Naive thymus-derived CD4-positive, alpha-beta T cell (primary cell): ENCODE measurements at regions of chr19 and their contacts with region 1.

Region 1: GRCh38 chr19:4791170-4792018 is at the start of gene FEM1A:
- DNase-seq: peak; percentile 93 to 100 (median 99)
- ATAC-seq: peak; percentile 96
- H3K4me3 ChIP-seq: peak within 1 kb of the TSS; percentile 72
- H3K4me3 Mint-ChIP-seq: peak within 1 kb of the TSS; percentile 75 to 90 (median 87)
- H3K27ac ChIP-seq: peak within 1 kb of the TSS; percentile 92
- H3K27ac Mint-ChIP-seq: peak within 1 kb of the TSS; percentile 46 to 94 (median 85)
- H3K4me1 ChIP-seq: peaks cover 0 to 7% of the 10 kb centered on the region in 2 donors
- H3K4me1 Mint-ChIP-seq: peaks cover 7 to 46% (median 29%) of the 10 kb centered on the region in 7 donors
- H3K27me3 ChIP-seq: no peaks in the 10 kb centered on the region
- H3K27me3 Mint-ChIP-seq: no peaks in the 10 kb centered on the region
- total RNA-seq, gene FEM1A: 10.2 to 17.2 (median 14.4) TPM

Region 2: GRCh38 chr19:3626473-3627350 is 1164.7 kb before region 1 on chr19 and contains the start of gene CACTIN:
- CTCF ChIA-PET with region 1: no interaction called
- POLR2A ChIA-PET with region 1: no interaction called
- intact Hi-C with region 1: loop called in 1 of 2 experiments (anchors 5 kb)
- DNase-seq: peak; percentile 97 to 100 (median 99)
- ATAC-seq: peak; percentile 99
- H3K4me3 ChIP-seq: peak within 1 kb of the TSS; percentile 73
- H3K4me3 Mint-ChIP-seq: peak within 1 kb of the TSS; percentile 85 to 98 (median 94)
- H3K27ac ChIP-seq: peak within 1 kb of the TSS; percentile 81
- H3K27ac Mint-ChIP-seq: peak within 1 kb of the TSS; percentile 94 to 100 (median 99)
- H3K4me1 ChIP-seq: peaks cover 8 to 16% of the 10 kb centered on the region in 2 donors
- H3K4me1 Mint-ChIP-seq: peaks cover 23 to 43% (median 27%) of the 10 kb centered on the region in 7 donors
- H3K27me3 ChIP-seq: no peaks in the 10 kb centered on the region
- H3K27me3 Mint-ChIP-seq: no peaks in the 10 kb centered on the region
- total RNA-seq, gene CACTIN: 35.4 to 46.7 (median 37.1) TPM

Region 3: GRCh38 chr19:4638828-4639530 is 152.4 kb before region 1 on chr19 and contains the start of gene TNFAIP8L1:
- CTCF ChIA-PET with region 1: interaction called, 4 read pairs
- POLR2A ChIA-PET with region 1: interaction called, 7 read pairs
- intact Hi-C with region 1: loop called in 1 of 2 experiments (anchors 1 kb)
- DNase-seq: peak; percentile 97 to 100 (median 99)
- ATAC-seq: peak; percentile 97
- H3K4me3 ChIP-seq: peak within 1 kb of the TSS; percentile 81
- H3K4me3 Mint-ChIP-seq: peak within 1 kb of the TSS; percentile 90 to 99 (median 96)
- H3K27ac ChIP-seq: peak within 1 kb of the TSS; percentile 92
- H3K27ac Mint-ChIP-seq: peak within 1 kb of the TSS; percentile 92 to 99 (median 97)
- H3K4me1 ChIP-seq: peaks cover 27 to 32% of the 10 kb centered on the region in 2 donors
- H3K4me1 Mint-ChIP-seq: peaks cover 15 to 43% (median 32%) of the 10 kb centered on the region in 7 donors
- H3K27me3 ChIP-seq: no peaks in the 10 kb centered on the region
- H3K27me3 Mint-ChIP-seq: no peaks in the 10 kb centered on the region
- total RNA-seq, gene TNFAIP8L1: 11.2 to 22.4 (median 20.6) TPM

Region 4: DNA sequence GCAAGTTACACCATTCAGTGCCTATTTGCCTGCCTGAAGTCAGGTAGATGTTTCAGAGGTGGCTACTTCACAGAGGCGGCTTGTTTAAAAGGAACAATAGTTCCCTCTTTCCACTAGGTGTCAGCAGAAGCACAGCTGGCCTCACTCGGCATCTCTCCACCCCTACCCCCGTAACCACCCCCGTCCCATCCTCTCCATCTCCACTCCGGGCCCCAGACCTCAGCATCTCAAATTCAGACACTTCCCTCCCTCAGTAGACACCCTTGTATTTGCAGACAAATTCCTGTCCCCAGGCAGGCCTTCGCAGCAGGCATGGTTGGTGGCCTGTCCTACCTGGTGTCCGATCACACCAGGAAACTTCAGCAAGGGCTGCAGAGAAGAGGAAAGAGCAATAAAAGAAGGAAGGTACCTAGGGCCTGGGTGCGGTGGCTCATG is 58.7 kb before region 1 on chr19:
- CTCF ChIA-PET with region 1: interaction called, 33 read pairs
- POLR2A ChIA-PET with region 1: interaction called, 20 read pairs
- intact Hi-C with region 1: loop called (anchors 1 kb)
- DNase-seq: peak in 8 of 9 donors; percentile 38 to 66 (median 54)
- ATAC-seq: peak; percentile 95
- H3K4me3 ChIP-seq: peak overlapping the region; percentile 24
- H3K4me3 Mint-ChIP-seq: peak overlapping the region in 6 of 10 donors; percentile 2 to 77 (median 35)
- H3K27ac ChIP-seq: no peak overlapping the region
- H3K27ac Mint-ChIP-seq: peak overlapping the region in 4 of 9 donors; percentile 1 to 78 (median 52)
- H3K4me1 ChIP-seq: peaks cover 3 to 4% of the 10 kb centered on the region in 2 donors
- H3K4me1 Mint-ChIP-seq: peaks cover 4 to 11% (median 6%) of the 10 kb centered on the region in 7 donors
- H3K27me3 ChIP-seq: no peaks in the 10 kb centered on the region
- H3K27me3 Mint-ChIP-seq: peaks cover 0 to 14% (median 5%) of the 10 kb centered on the region in 5 donors

Region 5: GRCh38 chr19:4815426-4816201 is 24.2 kb after region 1 on chr19:
- CTCF ChIA-PET with region 1: no interaction called
- POLR2A ChIA-PET with region 1: interaction called, 3 read pairs
- intact Hi-C with region 1: loop called (anchors 1 kb)
- DNase-seq: peak; percentile 43 to 77 (median 67)
- ATAC-seq: peak; percentile 86
- H3K4me3 ChIP-seq: peak overlapping the region; percentile 40
- H3K4me3 Mint-ChIP-seq: peak overlapping the region; percentile 68 to 88 (median 81)
- H3K27ac ChIP-seq: peak overlapping the region; percentile 48
- H3K27ac Mint-ChIP-seq: peak overlapping the region; percentile 26 to 91 (median 87)
- H3K4me1 ChIP-seq: peaks cover 4 to 14% of the 10 kb centered on the region in 2 donors
- H3K4me1 Mint-ChIP-seq: peaks cover 11 to 29% (median 18%) of the 10 kb centered on the region in 7 donors
- H3K27me3 ChIP-seq: no peaks in the 10 kb centered on the region
- H3K27me3 Mint-ChIP-seq: no peaks in the 10 kb centered on the region

Region 6: GRCh38 chr19:4968462-4969291 is 177.3 kb after region 1 on chr19 and contains the start of gene KDM4B:
- CTCF ChIA-PET with region 1: no interaction called
- POLR2A ChIA-PET with region 1: interaction called, 7 read pairs
- intact Hi-C with region 1: loop called (anchors 1 kb)
- DNase-seq: peak; percentile 97 to 100 (median 99)
- ATAC-seq: peak; percentile 94
- H3K4me3 ChIP-seq: peak within 1 kb of the TSS; percentile 69
- H3K4me3 Mint-ChIP-seq: peak within 1 kb of the TSS; percentile 88 to 97 (median 94)
- H3K27ac ChIP-seq: peak within 1 kb of the TSS; percentile 67
- H3K27ac Mint-ChIP-seq: peak within 1 kb of the TSS; percentile 84 to 96 (median 91)
- H3K4me1 ChIP-seq: peaks cover 26 to 29% of the 10 kb centered on the region in 2 donors
- H3K4me1 Mint-ChIP-seq: peaks cover 26 to 40% (median 32%) of the 10 kb centered on the region in 7 donors
- H3K27me3 ChIP-seq: no peaks in the 10 kb centered on the region
- H3K27me3 Mint-ChIP-seq: no peaks in the 10 kb centered on the region
- total RNA-seq, gene KDM4B: 45.8 to 78.0 (median 65.8) TPM

Region 7: GRCh38 chr19:5790573-5791520 is 999.5 kb after region 1 on chr19 and contains the start of gene DUS3L:
- CTCF ChIA-PET with region 1: no interaction called
- POLR2A ChIA-PET with region 1: no interaction called
- intact Hi-C with region 1: loop called in 1 of 2 experiments (anchors 2 kb)
- DNase-seq: peak; percentile 90 to 97 (median 94)
- ATAC-seq: peak; percentile 97
- H3K4me3 ChIP-seq: peak within 1 kb of the TSS; percentile 95
- H3K4me3 Mint-ChIP-seq: peak within 1 kb of the TSS; percentile 94 to 100 (median 100)
- H3K27ac ChIP-seq: peak within 1 kb of the TSS; percentile 91
- H3K27ac Mint-ChIP-seq: peak within 1 kb of the TSS; percentile 99 to 100 (median 100)
- H3K4me1 ChIP-seq: peaks cover 8 to 12% of the 10 kb centered on the region in 2 donors
- H3K4me1 Mint-ChIP-seq: peaks cover 6 to 22% (median 15%) of the 10 kb centered on the region in 7 donors
- H3K27me3 ChIP-seq: no peaks in the 10 kb centered on the region
- H3K27me3 Mint-ChIP-seq: no peaks in the 10 kb centered on the region
- total RNA-seq, gene DUS3L: 53.2 to 179 (median 82.7) TPM